Endothelial cell of umbilical vein (primary cell): ENCODE measurements at regions of chr4 and their contacts with region 1.

Region 1: GRCh38 chr4:66169341-66169740 is 499.1 kb upstream of the EPHA5 start:
- DNase-seq: peak; percentile 4
- H3K4me3 ChIP-seq: no peak overlapping the region
- H3K27ac ChIP-seq: no peak overlapping the region
- H3K4me1 ChIP-seq: no peaks in the 10 kb centered on the region
- H3K27me3 ChIP-seq: peaks cover 0 to 2% of the 10 kb centered on the region in 2 experiments
- CTCF ChIP-seq: no peak
- POLR2A ChIP-seq: no peak

Region 2: DNA sequence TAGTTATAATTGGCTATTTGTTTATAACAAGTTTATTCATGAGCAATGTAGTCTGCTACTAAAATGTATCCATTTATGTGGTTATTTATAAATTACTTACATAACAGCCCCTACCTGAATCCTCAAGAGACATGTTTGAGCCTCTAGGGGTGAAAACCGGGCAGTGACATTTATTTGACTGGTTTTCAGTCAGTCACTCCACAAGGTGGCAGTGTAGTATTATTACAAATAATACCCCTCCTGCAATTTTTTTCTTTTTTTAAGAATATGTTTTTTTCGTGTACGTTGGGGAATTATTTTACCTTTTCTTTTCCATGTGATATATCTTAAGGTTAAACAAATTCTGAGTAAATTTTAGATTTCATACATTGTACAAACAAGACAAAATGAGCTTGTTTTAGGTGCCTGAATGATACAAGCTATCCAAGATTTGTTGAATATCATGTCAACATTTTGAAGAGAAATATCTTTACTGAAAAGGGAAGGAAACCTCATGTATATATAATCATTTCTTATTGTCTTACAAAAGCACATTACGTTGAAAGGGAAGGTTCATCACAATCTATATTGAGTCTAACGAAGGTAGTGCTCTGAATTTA is 1161.4 kb before region 1 on chr4:
- CTCF ChIA-PET with region 1: interaction called, 3 read pairs
- POLR2A ChIA-PET with region 1: no interaction called
- dilution Hi-C with region 1: no loop called
- intact Hi-C with region 1: loop called (anchors 1 kb)
- DNase-seq: peak; percentile 50
- H3K4me3 ChIP-seq: no peak overlapping the region
- H3K27ac ChIP-seq: no peak overlapping the region
- H3K4me1 ChIP-seq: no peaks in the 10 kb centered on the region
- H3K27me3 ChIP-seq: no peaks in the 10 kb centered on the region
- CTCF ChIP-seq: peak; percentile 39 to 40
- POLR2A ChIP-seq: no peak

Region 3: GRCh38 chr4:65089666-65090065 is 1079.7 kb before region 1 on chr4:
- CTCF ChIA-PET with region 1: interaction called, 6 read pairs
- POLR2A ChIA-PET with region 1: no interaction called
- dilution Hi-C with region 1: no loop called
- intact Hi-C with region 1: loop called (anchors 10 kb)
- DNase-seq: peak; percentile 2
- H3K4me3 ChIP-seq: no peak overlapping the region
- H3K27ac ChIP-seq: no peak overlapping the region
- H3K4me1 ChIP-seq: no peaks in the 10 kb centered on the region
- H3K27me3 ChIP-seq: no peaks in the 10 kb centered on the region
- CTCF ChIP-seq: no peak
- POLR2A ChIP-seq: no peak